ENCODE measurements at regions of chr10 and their contacts with region 1.

Region 1: DNA sequence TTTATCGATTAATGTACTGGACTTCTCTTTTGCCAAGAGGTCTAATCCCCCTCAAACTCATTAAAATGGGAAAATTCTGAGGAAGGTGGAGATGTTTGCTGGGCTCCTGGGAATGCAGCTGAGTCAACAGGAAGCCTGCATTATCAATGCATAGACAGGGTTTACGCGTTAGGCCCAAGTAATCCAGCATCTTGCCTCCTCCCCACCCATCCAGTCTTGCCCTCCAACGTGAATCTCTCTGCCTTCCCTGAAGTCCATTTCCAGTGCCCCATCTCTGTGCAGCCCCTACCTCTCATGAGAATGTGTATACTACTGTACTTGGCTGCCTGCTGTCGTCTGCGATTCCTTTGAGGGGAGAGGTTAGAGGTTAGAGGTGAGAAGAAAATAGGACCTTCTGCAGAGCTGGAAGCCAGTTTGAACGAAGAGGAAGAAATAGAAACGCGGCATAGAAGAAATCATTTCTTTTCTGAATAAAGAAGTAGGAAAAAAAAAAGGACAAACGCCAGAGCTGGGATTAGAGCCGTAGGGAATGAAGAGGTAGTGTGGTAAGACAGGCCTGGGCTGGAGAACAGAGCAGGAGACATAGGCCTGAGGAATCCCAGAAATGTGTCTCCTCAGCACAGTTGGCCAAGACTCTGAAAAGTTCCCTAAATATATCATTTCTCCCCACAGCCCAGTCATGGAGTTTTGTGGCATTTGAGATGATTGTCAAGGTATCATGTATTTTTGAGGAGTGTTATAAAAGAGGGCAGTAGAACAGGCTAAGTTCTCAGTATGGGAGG is 75.6 kb downstream of the MYOF start:
- DNase-seq: peak; percentile 32
- H3K4me3 ChIP-seq: no peak overlapping the region
- H3K27ac ChIP-seq: no peak overlapping the region
- H3K4me1 ChIP-seq: peaks cover 6% of the 10 kb centered on the region
- H3K27me3 ChIP-seq: no peaks in the 10 kb centered on the region
- CTCF ChIP-seq: no peak

Region 2: DNA sequence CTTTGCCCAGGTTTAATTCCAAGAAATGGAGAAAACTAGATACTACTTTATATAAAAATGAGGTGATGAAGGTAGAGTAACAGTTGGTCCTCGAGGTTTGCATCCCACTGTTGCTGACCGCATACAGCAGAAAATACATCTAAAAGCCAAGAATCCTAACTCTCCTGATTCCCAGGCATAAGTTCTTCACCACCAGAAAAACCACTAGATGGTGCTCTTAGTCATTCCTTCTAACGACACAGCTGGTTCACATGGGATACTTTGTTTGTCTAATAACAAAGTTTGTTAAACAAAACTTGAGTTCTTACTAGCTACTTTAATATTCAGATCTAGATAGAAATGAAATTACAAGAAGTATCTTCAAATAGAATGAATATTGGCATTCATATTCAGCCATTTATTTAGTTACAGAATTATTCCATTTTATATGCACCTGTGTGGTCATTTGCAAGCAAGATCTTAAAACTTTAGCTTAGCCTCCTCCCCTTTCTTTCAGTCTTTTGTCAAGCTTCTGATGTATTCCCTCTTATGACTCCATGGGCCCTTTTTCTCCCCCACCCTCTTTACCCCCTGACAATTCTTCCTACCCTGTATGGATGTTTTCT is 400.0 kb before region 1 on chr10:
- CTCF ChIA-PET with region 1: no interaction called
- POLR2A ChIA-PET with region 1: no interaction called
- intact Hi-C with region 1: no loop called
- DNase-seq: peak; percentile 62
- H3K4me3 ChIP-seq: no peak overlapping the region
- H3K27ac ChIP-seq: no peak overlapping the region
- H3K4me1 ChIP-seq: no peaks in the 10 kb centered on the region
- H3K27me3 ChIP-seq: no peaks in the 10 kb centered on the region
- CTCF ChIP-seq: peak; percentile 72

Region 3: GRCh38 chr10:93437088-93437945 is 30.8 kb after region 1 on chr10:
- CTCF ChIA-PET with region 1: no interaction called
- POLR2A ChIA-PET with region 1: interaction called, 15 read pairs
- intact Hi-C with region 1: no loop called
- DNase-seq: peak; percentile 94
- H3K4me3 ChIP-seq: no peak overlapping the region
- H3K27ac ChIP-seq: peak overlapping the region; percentile 95
- H3K4me1 ChIP-seq: peaks cover 56% of the 10 kb centered on the region
- H3K27me3 ChIP-seq: no peaks in the 10 kb centered on the region
- CTCF ChIP-seq: no peak